Naive thymus-derived CD8-positive, alpha-beta T cell (primary cell): ENCODE measurements at regions of chr2 and their contacts with region 1.

Region 1: DNA sequence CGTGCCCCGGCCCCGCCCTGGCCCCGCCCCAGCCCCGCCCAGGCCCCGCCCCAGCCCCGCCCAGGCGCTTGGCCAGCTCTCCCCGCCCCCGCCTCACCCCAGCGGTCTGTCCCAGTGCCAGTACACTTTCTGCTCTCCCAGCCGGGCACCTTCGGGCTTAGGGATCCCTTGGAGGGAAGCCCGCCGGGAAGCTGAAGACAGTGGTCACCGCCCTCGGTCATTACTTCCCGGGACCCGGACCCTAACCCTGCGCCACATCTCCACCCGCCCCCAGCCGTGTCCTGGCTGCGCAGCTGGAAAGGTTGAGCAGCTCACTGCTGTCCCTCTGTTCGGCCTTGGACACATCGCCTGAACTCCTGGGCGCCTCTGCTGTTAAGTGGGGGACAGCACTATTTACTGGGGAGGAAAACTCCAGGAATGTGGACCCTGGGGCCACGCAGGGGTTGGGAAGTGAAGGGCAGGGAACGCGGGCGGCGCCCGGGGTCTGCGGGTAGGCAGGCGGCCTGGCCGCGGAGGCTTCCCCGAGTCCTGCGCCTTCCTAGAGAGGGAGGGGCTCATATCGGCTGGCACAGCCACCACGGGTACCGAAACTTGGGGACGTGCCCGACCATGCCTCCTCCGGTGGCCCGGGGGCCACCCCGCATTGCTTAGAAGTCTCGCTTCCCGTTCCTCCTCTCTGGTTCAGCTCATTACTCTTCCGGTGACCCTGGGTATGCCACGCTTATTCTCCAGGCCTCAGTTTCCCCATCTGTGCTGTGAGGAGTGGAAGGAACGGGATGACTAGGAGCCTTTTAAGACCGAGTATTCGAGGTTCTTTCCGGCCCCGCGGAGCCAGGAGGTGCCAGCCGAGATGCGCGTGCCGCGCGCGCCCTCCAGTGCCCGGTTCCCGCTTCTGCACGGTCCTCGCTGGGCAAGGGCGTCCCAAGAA is 121.0 kb downstream of the GYPC start:
- DNase-seq: peak; percentile 61 to 86 (median 82)
- ATAC-seq: peak; percentile 89
- H3K4me3 Mint-ChIP-seq: peak overlapping the region; percentile 93 to 99 (median 95)
- H3K27ac Mint-ChIP-seq: peak overlapping the region; percentile 70 to 95 (median 92)
- H3K4me1 Mint-ChIP-seq: peaks cover 18 to 36% (median 27%) of the 10 kb centered on the region in 4 donors
- H3K27me3 Mint-ChIP-seq: peaks cover 2 to 9% (median 5%) of the 10 kb centered on the region in 5 donors

Region 2: DNA sequence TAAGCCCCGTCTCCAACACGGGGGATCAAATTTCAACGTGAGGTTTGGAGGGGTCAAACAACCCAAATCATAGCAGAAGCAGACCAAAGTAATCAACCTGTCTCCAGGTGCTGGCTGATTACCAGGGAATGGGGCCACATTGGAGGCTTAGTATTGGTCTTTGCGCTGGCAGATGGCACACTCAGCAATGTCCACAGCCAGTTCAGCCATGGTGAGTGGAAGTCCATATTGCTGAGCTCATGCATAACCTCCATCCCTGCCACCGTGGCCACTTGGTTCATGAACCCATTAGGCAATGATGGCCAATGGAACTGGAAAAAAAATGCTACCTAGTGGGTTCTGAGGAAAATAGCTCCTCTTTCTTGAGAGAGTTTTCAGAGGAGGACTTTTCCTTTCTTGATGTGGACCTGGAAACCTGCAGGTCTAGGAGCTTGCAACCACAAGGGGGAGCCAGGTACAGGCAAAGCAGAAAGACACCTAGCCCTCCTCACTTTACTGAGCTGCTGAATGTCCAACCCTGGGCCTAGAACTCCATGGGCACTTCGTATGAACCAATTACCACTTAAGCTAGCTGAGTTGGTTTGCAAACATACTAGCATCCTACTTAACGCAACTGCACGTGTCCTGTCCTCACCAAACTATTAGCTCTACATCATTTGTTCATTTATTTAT is 249.0 kb before region 1 on chr2:
- POLR2A ChIA-PET with region 1: interaction called, 14 read pairs
- DNase-seq: peak; percentile 55 to 89 (median 68)
- ATAC-seq: peak; percentile 66 to 85
- H3K4me3 Mint-ChIP-seq: no peak overlapping the region
- H3K27ac Mint-ChIP-seq: no peak overlapping the region
- H3K4me1 Mint-ChIP-seq: peaks cover 0 to 2% (median under 1%) of the 10 kb centered on the region in 4 donors
- H3K27me3 Mint-ChIP-seq: peaks cover 0 to 4% (median 0%) of the 10 kb centered on the region in 5 donors

Region 3: DNA sequence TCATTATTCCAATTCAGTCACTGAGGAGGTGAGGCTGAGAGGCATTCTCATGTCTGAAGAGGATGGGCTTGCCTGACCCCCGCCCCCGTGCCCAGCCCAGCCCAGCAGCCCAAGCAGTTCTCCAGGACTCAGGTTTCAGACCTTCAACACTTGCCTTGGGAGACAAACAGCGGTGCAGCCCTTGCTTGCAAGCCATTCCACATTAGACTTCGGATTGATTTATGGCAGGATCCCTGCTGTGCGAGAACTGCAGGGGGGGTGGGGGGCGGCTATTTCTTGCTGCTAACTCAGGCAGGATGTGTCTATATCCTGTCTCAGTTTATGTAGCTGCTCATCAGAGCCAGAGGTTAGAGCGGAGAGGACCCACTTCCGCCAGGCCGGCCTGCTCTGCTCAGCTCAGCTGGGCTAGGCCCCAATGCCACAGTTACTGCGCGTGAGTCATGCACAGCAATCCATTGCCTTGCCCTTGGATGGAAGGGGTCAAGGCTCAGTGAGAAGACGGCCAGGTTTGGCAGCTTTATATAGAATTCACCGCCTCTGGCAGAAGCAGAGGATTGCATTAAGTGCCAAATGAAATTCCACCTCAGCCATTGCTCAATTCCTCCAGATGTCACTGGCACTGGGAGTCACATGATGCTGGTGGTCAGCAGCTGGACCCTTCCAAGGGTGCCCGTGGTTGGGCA is 119.2 kb before region 1 on chr2:
- POLR2A ChIA-PET with region 1: interaction called, 16 read pairs
- DNase-seq: peak in 9 of 10 donors; percentile 37 to 85 (median 75)
- ATAC-seq: peak; percentile 64 to 68
- H3K4me3 Mint-ChIP-seq: peak overlapping the region; percentile 93 to 100 (median 96)
- H3K27ac Mint-ChIP-seq: peak overlapping the region; percentile 91 to 100 (median 98)
- H3K4me1 Mint-ChIP-seq: peaks cover 39 to 74% (median 71%) of the 10 kb centered on the region in 4 donors
- H3K27me3 Mint-ChIP-seq: no peaks in the 10 kb centered on the region

Region 4: DNA sequence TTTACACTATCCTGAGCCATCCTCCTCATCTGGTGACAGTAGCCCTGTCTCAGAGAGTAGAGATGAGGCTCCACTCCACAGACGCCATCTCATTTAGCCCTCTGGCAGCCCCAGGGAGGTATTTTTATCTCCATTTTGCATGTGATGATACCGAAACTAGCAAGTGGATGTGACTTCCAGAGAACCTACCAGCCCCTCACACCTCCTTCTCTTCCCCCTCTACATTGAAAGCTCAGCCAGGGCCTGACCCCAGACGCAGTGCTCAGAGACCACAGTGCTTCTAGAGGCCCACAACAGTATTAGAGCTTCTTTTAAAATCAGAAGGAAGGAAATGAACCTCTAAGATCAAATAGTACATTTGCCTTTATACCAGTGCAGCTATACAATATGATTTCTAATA is 112.7 kb before region 1 on chr2:
- POLR2A ChIA-PET with region 1: interaction called, 16 read pairs
- DNase-seq: peak in 5 of 10 donors; percentile 38 to 69 (median 60)
- ATAC-seq: peak; percentile 75 to 87
- H3K4me3 Mint-ChIP-seq: peak overlapping the region; percentile 72 to 95 (median 84)
- H3K27ac Mint-ChIP-seq: peak overlapping the region; percentile 95 to 100 (median 98)
- H3K4me1 Mint-ChIP-seq: peaks cover 60 to 100% (median 96%) of the 10 kb centered on the region in 4 donors
- H3K27me3 Mint-ChIP-seq: no peaks in the 10 kb centered on the region

Region 5: GRCh38 chr2:126761981-126762878 is 14.7 kb before region 1 on chr2:
- POLR2A ChIA-PET with region 1: interaction called, 20 read pairs
- DNase-seq: peak; percentile 26 to 80 (median 52)
- ATAC-seq: peak; percentile 94 to 96
- H3K4me3 Mint-ChIP-seq: peak overlapping the region; percentile 61 to 87 (median 76)
- H3K27ac Mint-ChIP-seq: peak overlapping the region; percentile 82 to 97 (median 94)
- H3K4me1 Mint-ChIP-seq: peaks cover 33 to 94% (median 83%) of the 10 kb centered on the region in 4 donors
- H3K27me3 Mint-ChIP-seq: no peaks in the 10 kb centered on the region